H1 (cell line): ENCODE measurements at regions of chr17 and their contacts with region 1.

Region 1: GRCh38 chr17:41835800-41836549 is at the start of gene NT5C3B:
- DNase-seq: peak in 1 of 2 experiments; percentile 76
- H3K4me3 ChIP-seq: peak within 1 kb of the TSS; percentile 74 to 96 (median 82)
- H3K27ac ChIP-seq: no peak within 1 kb of the TSS
- H3K4me1 ChIP-seq: peaks cover 0 to 5% (median 0%) of the 10 kb centered on the region in 4 experiments; a peak in 1 of 7 replicates
- H3K27me3 ChIP-seq: peaks cover 0 to 5% (median 0%) of the 10 kb centered on the region in 4 experiments; a peak in 1 of 7 replicates
- CTCF ChIP-seq: no peak
- EP300 ChIP-seq: no peak
- POLR2A ChIP-seq: no peak
- RAD21 ChIP-seq: no peak
- total RNA-seq, gene NT5C3B: 68.7 and 71.4 TPM in 2 replicates

Region 2: DNA sequence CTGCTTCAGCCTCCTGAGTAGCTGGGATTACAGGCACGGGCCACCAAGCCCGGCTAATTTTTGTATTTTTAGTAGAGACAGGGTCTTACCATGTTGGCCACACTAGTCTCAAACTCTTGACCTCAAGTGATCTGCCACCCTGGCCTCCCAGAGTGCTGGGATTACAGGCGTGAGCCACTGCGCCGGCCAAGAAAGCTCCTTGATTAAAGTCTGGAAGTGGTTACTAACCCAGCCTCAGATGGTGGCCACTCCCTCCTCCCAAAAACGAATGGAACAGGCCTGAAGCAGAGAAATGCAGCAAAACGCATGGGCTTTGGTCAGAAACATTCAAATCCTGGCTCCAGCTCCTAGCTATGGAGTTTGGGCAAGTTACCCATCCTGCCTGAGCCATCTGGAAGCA is 11.9 kb before region 1 on chr17:
- CTCF ChIA-PET with region 1: interaction called, 6 read pairs
- POLR2A ChIA-PET with region 1: interaction called, 18 read pairs
- DNase-seq: no peak
- H3K4me3 ChIP-seq: no peak overlapping the region
- H3K27ac ChIP-seq: no peak overlapping the region
- H3K4me1 ChIP-seq: peaks cover 0 to 13% (median 9%) of the 10 kb centered on the region in 4 experiments; a peak in 6 of 7 replicates
- H3K27me3 ChIP-seq: no peaks in the 10 kb centered on the region
- CTCF ChIP-seq: no peak
- EP300 ChIP-seq: no peak
- POLR2A ChIP-seq: no peak
- RAD21 ChIP-seq: no peak

Region 3: DNA sequence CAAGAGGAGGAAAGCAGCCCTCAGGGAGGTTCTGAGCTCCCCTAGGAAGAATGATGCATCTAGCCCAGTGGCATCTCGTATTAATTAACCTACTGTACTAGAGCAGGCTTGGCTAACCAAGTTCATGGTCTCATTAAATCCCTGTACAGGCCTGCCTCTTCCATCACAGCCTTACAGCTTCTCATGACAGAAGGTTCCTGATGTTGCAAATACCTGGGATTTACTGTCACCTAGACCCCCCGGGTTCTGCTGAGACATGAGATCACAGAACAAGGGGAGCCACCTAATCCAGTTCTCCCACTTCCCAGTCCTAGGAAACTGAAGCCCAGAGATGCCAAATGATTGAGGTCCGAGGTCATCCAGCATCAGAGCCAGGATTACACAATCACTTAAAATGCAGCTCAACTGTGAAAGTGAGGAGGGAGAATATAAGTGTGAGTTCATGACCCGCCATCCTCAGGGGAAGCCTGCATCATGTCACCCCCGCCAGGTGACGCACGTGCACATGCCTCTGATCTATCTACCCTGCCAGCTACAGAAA is 58.9 kb after region 1 on chr17:
- CTCF ChIA-PET with region 1: no interaction called
- POLR2A ChIA-PET with region 1: no interaction called
- DNase-seq: no peak
- H3K4me3 ChIP-seq: no peak overlapping the region
- H3K27ac ChIP-seq: no peak overlapping the region
- H3K4me1 ChIP-seq: no peaks in the 10 kb centered on the region
- H3K27me3 ChIP-seq: no peaks in the 10 kb centered on the region
- CTCF ChIP-seq: no peak
- EP300 ChIP-seq: no peak
- POLR2A ChIP-seq: no peak
- RAD21 ChIP-seq: no peak